Activated CD8-positive, alpha-beta T cell treated with anti-CD3 and anti-CD28 coated beads, Interleukin-2, amount 10 ng/mL, durations not matched to agents 7 days and 5 days (primary cell): ENCODE measurements at regions of chr3 and their contacts with region 1.

Region 1: GRCh38 chr3:160399125-160400029 is at the starts of genes IFT80 and SMC4:
- DNase-seq: peak; percentile 97
- ATAC-seq: peak; percentile 90
- H3K4me3 Mint-ChIP-seq: peak within 1 kb of the TSS; percentile 94
- H3K27ac Mint-ChIP-seq: peak within 1 kb of the TSS; percentile 97
- H3K4me1 Mint-ChIP-seq: peaks cover 44% of the 10 kb centered on the region
- H3K27me3 Mint-ChIP-seq: no peaks in the 10 kb centered on the region
- total RNA-seq, gene IFT80: 27.5 to 29.7 TPM
- total RNA-seq, gene SMC4: 292 to 300 TPM

Region 2: DNA sequence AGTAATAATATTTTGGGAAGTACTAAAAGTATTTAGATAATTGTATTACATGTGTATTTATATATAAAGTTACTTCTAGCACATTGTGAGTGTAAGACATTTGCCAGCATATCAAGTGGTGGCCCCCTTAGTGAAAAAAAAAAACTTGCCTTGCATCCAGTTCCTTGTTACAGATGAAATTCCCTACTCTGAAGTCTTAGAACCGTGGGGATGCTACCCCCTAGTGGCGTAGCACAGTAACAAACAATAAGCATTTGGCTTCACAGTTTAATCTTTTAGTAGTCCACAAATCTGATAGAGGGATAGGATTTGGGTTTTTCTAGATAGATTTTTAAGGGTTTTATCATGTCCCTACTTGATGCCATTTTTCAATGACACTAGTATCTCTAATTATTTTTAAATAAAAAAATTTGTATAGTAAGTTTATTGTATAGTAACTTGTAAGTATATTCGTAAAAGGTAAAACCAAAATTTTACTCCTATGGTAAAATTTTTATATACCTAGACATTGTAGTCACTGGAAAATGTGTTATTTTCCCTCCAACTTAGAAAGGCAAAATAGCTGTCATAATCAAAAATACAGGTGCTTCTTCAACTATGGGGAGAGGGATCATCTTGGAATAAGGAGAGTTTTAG is 14.4 kb after region 1 on chr3:
- CTCF ChIA-PET with region 1: interaction called, 14 read pairs
- POLR2A ChIA-PET with region 1: interaction called, 21 read pairs
- DNase-seq: peak; percentile 70
- ATAC-seq: peak; percentile 70
- H3K4me3 Mint-ChIP-seq: no peak overlapping the region
- H3K27ac Mint-ChIP-seq: no peak overlapping the region
- H3K4me1 Mint-ChIP-seq: peaks cover 47% of the 10 kb centered on the region
- H3K27me3 Mint-ChIP-seq: no peaks in the 10 kb centered on the region